Psoas muscle (tissue), 8 donors: ENCODE measurements at regions of chr7 and their contacts with region 1.

Region 1: GRCh38 chr7:10076660-10077300 is 896.9 kb upstream of the PHF14 start:
- DNase-seq: no peak
- ATAC-seq: no peak
- H3K4me3 ChIP-seq: no peak overlapping the region
- H3K27ac ChIP-seq: no peak overlapping the region
- H3K4me1 ChIP-seq: no peaks in the 10 kb centered on the region
- H3K27me3 ChIP-seq: no peaks in the 10 kb centered on the region
- CTCF ChIP-seq: no peak

Region 2: DNA sequence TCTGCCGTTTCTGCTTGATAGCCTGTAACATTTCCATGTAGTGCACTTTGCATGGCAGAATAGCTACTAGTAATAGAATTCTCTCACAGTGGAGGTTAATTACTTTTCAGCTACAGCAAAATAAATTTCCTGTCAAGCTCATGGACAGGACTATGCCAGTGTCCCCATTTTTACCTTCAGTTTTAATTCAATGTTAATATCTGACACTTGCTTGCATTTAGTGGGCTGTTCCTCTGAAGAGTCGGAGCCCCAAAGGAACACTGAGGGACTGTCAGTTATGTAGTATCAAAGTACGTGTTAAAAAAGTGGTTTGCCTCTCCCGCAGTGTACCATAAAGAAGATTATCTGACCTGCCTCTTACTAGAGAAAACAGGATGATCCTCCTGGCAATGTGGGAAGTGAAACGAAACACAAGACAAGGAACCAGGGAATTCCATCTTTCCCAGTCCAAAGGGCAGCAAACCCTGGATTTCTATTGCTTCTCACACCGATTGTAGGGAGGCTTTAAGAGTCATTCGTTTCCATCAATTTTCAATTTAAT is 114.0 kb before region 1 on chr7:
- intact Hi-C with region 1: no loop called
- DNase-seq: no peak
- ATAC-seq: no peak
- H3K4me3 ChIP-seq: no peak overlapping the region
- H3K27ac ChIP-seq: no peak overlapping the region
- H3K4me1 ChIP-seq: no peaks in the 10 kb centered on the region
- H3K27me3 ChIP-seq: no peaks in the 10 kb centered on the region
- CTCF ChIP-seq: no peak

Region 3: DNA sequence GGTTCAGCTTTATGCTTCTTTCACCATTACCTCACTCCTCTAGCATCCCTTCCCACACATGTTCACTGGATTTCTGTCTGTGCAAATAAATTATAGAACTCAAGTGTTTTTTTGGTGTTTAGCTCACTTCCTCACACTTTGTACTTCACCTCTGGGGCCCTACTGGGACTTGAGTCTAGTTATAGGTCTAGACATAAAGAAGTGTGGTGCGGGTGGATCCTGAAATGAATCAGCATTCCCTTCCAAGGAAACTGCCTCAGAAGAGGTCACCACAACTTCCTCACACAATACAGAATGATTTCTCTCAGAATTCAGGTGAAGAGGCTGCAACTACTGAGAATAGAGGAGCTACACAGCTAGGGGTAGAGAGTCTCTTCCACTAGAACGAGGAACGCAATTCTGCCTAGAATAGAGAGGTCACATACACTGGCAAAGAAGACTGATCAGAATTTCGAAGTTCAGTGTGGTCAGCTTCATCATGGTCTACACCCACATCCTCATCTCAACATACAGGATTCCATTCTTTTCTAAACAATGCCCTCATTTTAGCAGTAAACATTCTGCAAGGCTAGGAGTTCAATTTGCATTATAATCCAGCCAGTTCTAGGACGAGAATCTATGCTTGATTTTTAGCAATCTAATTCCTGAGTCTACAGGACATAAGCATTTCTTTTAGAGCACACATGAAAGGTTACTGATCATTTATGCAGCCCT is 41.8 kb before region 1 on chr7:
- intact Hi-C with region 1: loop called in 1 of 2 experiments (anchors 2 kb)
- DNase-seq: no peak
- ATAC-seq: no peak
- H3K4me3 ChIP-seq: no peak overlapping the region
- H3K27ac ChIP-seq: no peak overlapping the region
- H3K4me1 ChIP-seq: no peaks in the 10 kb centered on the region
- H3K27me3 ChIP-seq: no peaks in the 10 kb centered on the region
- CTCF ChIP-seq: no peak

Region 4: GRCh38 chr7:10122551-10123100 is 45.8 kb after region 1 on chr7:
- intact Hi-C with region 1: no loop called
- DNase-seq: no peak
- ATAC-seq: no peak
- H3K4me3 ChIP-seq: no peak overlapping the region
- H3K27ac ChIP-seq: no peak overlapping the region
- H3K4me1 ChIP-seq: no peaks in the 10 kb centered on the region
- H3K27me3 ChIP-seq: no peaks in the 10 kb centered on the region
- CTCF ChIP-seq: no peak